ENCODE measurements at regions of chr11 and their contacts with region 1.

Region 1: DNA sequence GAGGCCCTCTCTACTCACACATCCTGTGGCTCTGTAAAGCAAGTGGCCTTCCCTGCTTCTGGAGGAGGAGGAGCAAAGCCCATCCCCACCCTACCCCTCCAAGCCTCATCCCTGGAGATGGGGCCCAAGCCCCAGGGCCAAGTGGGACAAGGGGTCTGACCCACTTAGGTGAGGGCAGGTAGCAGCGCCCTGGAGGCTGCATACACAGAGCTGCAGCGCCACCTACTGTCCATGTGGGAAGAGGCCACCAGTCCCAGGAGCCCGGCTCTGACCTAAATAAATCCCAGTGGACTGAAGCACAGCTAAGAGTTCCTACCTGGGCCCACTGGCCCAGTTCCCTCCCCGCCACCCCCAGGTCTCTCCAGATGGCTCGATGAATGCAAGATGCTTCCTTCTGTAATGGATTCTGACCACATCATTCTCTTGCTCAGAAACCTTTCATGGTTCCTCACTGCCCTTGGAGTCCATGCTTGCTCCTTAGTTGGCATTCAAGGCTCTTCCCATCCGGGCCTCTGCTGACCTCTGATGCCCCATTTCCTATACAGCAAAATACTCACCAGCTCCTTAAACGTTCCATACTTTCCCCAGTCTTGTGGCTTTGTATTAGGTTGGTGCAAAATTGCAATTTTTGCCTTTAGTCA is 62.1 kb downstream of the THAP12 start:
- DNase-seq: peak; percentile 61
- ATAC-seq: peak; percentile 89
- H3K4me3 ChIP-seq: no peak overlapping the region
- H3K27ac ChIP-seq: no peak overlapping the region
- H3K4me1 ChIP-seq: no peaks in the 10 kb centered on the region
- H3K27me3 ChIP-seq: peaks cover 46% of the 10 kb centered on the region
- CTCF ChIP-seq: peak; percentile 92
- POLR2A ChIP-seq: 0 out of 2 replicates have a peak, but pooled peaks have one; percentile 32
- RAD21 ChIP-seq: peak; percentile 96

Region 2: DNA sequence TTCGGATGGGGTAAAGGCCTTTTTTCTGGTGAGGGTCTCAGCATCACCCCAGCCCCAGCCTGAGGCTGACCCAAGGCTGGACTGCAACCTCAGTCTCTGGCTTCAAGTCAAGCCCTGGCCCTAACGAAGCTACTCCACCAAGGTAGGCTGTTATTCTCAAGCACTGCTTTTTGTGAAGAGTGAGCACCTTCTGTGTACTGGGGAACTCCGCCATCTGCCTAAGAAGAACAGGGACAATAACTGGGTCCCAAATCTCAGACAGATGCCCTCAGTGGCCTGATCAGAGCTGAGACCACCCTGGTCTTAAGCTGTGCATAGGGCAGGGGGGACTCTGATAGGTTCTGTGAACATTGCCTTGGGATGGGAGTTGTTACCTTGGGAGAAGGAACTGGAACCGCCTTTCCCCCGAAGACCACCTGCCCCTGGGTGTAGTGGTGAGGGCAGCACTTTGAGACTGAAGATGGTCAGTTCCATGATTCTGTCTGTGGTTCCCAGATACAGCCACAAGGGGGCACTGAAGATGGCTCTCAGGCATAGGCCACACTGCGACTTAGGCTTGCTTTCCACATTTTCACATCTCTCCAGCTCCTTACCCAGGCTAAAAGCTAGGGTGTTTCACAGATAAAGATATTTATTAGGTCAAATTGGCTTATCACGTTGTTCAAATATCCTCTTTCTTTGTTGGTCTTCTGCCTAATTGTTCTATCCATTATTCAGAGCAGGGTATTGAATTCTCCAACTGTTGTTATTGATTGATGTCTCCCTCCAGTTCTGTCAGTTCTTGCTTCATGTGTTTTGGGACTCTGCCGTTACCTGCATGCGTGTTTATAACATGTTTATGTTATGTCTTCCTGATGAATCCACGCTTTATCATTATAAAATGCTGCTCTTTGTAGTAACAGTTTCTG is 515.7 kb before region 1 on chr11:
- CTCF ChIA-PET with region 1: no interaction called
- POLR2A ChIA-PET with region 1: no interaction called
- dilution Hi-C with region 1: no loop called
- in situ Hi-C with region 1: loop called (anchors 10 kb)
- intact Hi-C with region 1: loop called (anchors 2 kb)
- DNase-seq: peak; percentile 65
- ATAC-seq: peak; percentile 99
- H3K4me3 ChIP-seq: no peak overlapping the region
- H3K27ac ChIP-seq: no peak overlapping the region
- H3K4me1 ChIP-seq: no peaks in the 10 kb centered on the region
- H3K27me3 ChIP-seq: no peaks in the 10 kb centered on the region
- CTCF ChIP-seq: peak; percentile 91
- POLR2A ChIP-seq: no peak
- RAD21 ChIP-seq: peak; percentile 88

Region 3: DNA sequence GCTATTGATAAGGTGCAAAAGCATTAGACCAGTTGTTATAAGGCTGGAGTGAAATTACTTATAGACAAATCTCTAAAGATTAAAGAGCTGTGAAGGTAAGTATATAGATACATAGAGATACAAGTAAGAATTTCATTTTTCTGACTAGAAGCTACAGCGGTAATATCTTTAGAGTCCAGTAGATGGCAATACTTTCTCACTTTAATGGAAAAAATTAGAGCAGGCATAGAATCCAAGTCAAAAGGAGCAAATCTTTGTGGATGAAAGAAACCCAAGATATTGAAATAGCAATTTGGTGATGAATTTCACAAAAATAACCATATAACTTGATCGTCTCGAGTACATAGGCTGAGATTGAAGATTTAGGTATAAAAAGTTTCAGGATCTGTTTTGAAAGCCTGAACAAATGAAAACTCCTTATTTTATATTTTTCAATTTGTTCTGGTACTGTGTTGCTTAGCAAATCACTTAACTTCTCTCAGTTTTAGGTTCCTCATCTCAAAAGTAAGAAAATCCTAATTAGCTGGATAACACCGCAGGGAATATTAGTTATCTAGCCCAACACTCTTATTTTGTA is 421.9 kb before region 1 on chr11:
- CTCF ChIA-PET with region 1: interaction called, 3 read pairs
- POLR2A ChIA-PET with region 1: no interaction called
- dilution Hi-C with region 1: no loop called
- in situ Hi-C with region 1: loop called (anchors 10 kb)
- intact Hi-C with region 1: loop called (anchors 1 kb)
- DNase-seq: peak; percentile 55
- ATAC-seq: peak; percentile 62
- H3K4me3 ChIP-seq: no peak overlapping the region
- H3K27ac ChIP-seq: no peak overlapping the region
- H3K4me1 ChIP-seq: no peaks in the 10 kb centered on the region
- H3K27me3 ChIP-seq: no peaks in the 10 kb centered on the region
- CTCF ChIP-seq: peak; percentile 76
- POLR2A ChIP-seq: no peak
- RAD21 ChIP-seq: peak; percentile 85

Region 4: DNA sequence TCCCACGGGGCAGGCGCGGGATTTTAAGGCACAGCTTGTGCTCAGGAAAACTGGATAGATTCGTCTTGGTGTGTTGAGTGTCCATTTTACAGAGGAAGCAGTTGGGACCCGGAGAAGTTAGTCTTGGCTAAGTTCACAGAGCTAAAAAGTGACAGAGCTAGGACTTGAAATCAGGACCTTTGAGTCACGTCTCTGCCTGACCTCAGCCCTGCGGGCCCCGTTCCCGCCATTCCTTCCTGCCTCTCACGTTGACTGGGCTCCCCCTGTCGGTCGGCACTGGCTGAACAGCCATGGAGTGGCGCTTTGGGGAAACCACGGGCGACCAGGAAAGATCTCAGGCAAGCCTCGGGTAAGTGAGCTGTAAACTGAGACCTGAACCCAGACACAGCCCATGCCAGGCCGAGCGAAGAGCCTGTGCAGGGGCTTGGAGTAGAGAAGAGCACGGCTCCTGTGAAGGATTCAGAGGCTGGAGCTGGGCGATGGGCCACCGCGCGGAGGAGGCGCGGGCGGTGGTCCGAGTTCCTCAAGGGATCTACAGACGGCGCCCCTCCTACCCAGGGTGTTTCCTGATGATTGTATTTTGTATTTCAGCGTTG is 166.7 kb before region 1 on chr11:
- CTCF ChIA-PET with region 1: no interaction called
- POLR2A ChIA-PET with region 1: no interaction called
- dilution Hi-C with region 1: no loop called
- in situ Hi-C with region 1: no loop called
- intact Hi-C with region 1: loop called (anchors 5 kb)
- DNase-seq: peak; percentile 65
- ATAC-seq: peak; percentile 91
- H3K4me3 ChIP-seq: no peak overlapping the region
- H3K27ac ChIP-seq: no peak overlapping the region
- H3K4me1 ChIP-seq: no peaks in the 10 kb centered on the region
- H3K27me3 ChIP-seq: peaks cover 10% of the 10 kb centered on the region; the same call in 1 of the 2 replicates
- CTCF ChIP-seq: peak; percentile 95
- POLR2A ChIP-seq: no peak
- RAD21 ChIP-seq: peak; percentile 94

Region 5: GRCh38 chr11:76207642-76208401 is 111.0 kb before region 1 on chr11:
- CTCF ChIA-PET with region 1: interaction called, 14 read pairs
- POLR2A ChIA-PET with region 1: no interaction called
- dilution Hi-C with region 1: no loop called
- in situ Hi-C with region 1: loop called (anchors 5 kb)
- intact Hi-C with region 1: loop called (anchors 1 kb)
- DNase-seq: peak; percentile 57
- ATAC-seq: peak; percentile 85
- H3K4me3 ChIP-seq: peak overlapping the region; percentile 41
- H3K27ac ChIP-seq: no peak overlapping the region
- H3K4me1 ChIP-seq: peaks cover 3% of the 10 kb centered on the region
- H3K27me3 ChIP-seq: peaks cover 87% of the 10 kb centered on the region
- CTCF ChIP-seq: peak; percentile 96
- POLR2A ChIP-seq: no peak
- RAD21 ChIP-seq: peak; percentile 90

Region 6: DNA sequence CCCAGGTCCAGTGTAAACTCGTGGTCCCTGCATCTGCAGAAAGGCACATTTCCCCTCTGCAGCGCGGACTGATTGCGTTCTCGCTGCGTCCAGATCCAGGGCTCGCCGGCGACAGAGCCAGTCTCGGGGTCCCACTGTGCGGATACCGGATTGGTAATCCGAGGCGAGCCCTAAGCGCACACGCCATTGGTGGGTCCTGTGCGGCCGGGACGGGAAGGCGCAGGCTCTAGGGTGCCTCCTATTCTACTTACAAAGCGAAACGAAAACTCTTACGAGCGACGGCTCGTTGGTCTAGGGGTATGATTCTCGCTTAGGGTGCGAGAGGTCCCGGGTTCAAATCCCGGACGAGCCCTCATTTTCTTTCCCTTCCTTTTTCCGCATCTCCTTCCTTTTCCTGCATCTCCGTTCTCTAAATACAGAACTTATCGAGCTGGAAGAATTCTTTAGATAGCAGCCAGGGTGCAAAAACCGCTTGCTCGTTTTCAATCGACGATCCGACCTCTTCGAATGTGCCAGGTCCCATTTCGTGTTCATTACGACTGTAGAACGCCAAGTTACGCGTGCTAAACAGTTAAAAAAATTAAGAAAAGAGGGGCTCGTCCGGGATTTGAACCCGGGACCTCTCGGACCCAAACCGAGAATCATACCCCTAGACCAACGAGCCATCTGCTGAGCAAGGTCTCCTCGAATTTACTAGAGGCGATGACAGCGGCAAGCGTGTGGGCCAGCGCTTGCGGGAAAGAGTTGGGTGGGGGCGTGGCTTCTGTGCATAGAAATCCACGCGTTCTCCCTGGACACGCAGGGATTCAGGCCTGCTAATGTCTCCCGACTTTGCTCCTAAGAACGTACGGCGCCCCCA is 83.4 kb before region 1 on chr11:
- CTCF ChIA-PET with region 1: no interaction called
- POLR2A ChIA-PET with region 1: no interaction called
- dilution Hi-C with region 1: no loop called
- in situ Hi-C with region 1: no loop called
- intact Hi-C with region 1: loop called (anchors 5 kb)
- DNase-seq: peak; percentile 91
- ATAC-seq: peak; percentile 84
- H3K4me3 ChIP-seq: peak overlapping the region; percentile 79
- H3K27ac ChIP-seq: peak overlapping the region; percentile 30
- H3K4me1 ChIP-seq: peaks cover 3% of the 10 kb centered on the region
- H3K27me3 ChIP-seq: peaks cover 9% of the 10 kb centered on the region
- CTCF ChIP-seq: no peak
- POLR2A ChIP-seq: 0 out of 2 replicates have a peak, but pooled peaks have one; percentile 50
- RAD21 ChIP-seq: no peak

Region 7: GRCh38 chr11:76512851-76513653 is 194.2 kb after region 1 on chr11:
- CTCF ChIA-PET with region 1: interaction called, 3 read pairs
- POLR2A ChIA-PET with region 1: no interaction called
- dilution Hi-C with region 1: no loop called
- in situ Hi-C with region 1: no loop called
- intact Hi-C with region 1: loop called (anchors 2 kb)
- DNase-seq: peak; percentile 65
- ATAC-seq: peak; percentile 80
- H3K4me3 ChIP-seq: no peak overlapping the region
- H3K27ac ChIP-seq: no peak overlapping the region
- H3K4me1 ChIP-seq: peaks cover 3% of the 10 kb centered on the region
- H3K27me3 ChIP-seq: no peaks in the 10 kb centered on the region
- CTCF ChIP-seq: peak; percentile 67
- POLR2A ChIP-seq: no peak
- RAD21 ChIP-seq: peak; percentile 73

Region 8: GRCh38 chr11:77009533-77010160 is 690.8 kb after region 1 on chr11:
- CTCF ChIA-PET with region 1: no interaction called
- POLR2A ChIA-PET with region 1: no interaction called
- dilution Hi-C with region 1: no loop called
- in situ Hi-C with region 1: no loop called
- intact Hi-C with region 1: no loop called
- DNase-seq: no peak
- ATAC-seq: no peak
- H3K4me3 ChIP-seq: no peak overlapping the region
- H3K27ac ChIP-seq: no peak overlapping the region
- H3K4me1 ChIP-seq: no peaks in the 10 kb centered on the region
- H3K27me3 ChIP-seq: no peaks in the 10 kb centered on the region
- CTCF ChIP-seq: no peak
- POLR2A ChIP-seq: no peak
- RAD21 ChIP-seq: no peak